Ovary (tissue), 10 donors: ENCODE measurements at regions of chr20 and their contacts with region 1.

Region 1: GRCh38 chr20:45311589-45312211 is 3.6 kb upstream of the MATN4 start:
- DNase-seq: peak; percentile 16 to 67 (median 32)
- H3K4me3 ChIP-seq: no peak overlapping the region
- H3K27ac ChIP-seq: no peak overlapping the region
- H3K4me1 ChIP-seq: no peaks in the 10 kb centered on the region
- H3K27me3 ChIP-seq: no peaks in the 10 kb centered on the region
- CTCF ChIP-seq: peak in 1 of 3 donors; percentile 32
- EP300 ChIP-seq: no peak
- POLR2A ChIP-seq: no peak

Region 2: DNA sequence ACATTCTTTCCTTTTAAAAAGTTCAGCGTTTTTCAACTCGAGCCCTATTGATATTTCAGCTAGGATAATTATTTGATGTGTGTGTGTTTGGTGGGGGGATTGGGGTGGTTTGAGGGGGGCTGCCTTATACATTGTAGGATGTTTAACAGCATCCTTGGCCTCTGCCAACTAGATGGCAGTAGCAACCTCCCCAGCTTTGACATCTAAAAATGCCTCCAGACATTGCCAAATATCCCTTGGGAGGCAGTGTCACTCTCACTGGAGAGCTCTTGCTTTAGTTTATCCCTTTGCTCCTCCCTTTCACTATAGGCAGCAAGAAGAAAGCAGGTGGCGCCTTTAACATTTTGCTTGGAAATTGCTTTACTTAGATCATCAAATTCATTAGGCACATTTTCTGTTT is 81.0 kb after region 1 on chr20:
- intact Hi-C with region 1: no loop called
- DNase-seq: no peak
- H3K4me3 ChIP-seq: no peak overlapping the region
- H3K27ac ChIP-seq: no peak overlapping the region
- H3K4me1 ChIP-seq: no peaks in the 10 kb centered on the region
- H3K27me3 ChIP-seq: no peaks in the 10 kb centered on the region
- CTCF ChIP-seq: no peak
- EP300 ChIP-seq: no peak
- POLR2A ChIP-seq: no peak

Region 3: DNA sequence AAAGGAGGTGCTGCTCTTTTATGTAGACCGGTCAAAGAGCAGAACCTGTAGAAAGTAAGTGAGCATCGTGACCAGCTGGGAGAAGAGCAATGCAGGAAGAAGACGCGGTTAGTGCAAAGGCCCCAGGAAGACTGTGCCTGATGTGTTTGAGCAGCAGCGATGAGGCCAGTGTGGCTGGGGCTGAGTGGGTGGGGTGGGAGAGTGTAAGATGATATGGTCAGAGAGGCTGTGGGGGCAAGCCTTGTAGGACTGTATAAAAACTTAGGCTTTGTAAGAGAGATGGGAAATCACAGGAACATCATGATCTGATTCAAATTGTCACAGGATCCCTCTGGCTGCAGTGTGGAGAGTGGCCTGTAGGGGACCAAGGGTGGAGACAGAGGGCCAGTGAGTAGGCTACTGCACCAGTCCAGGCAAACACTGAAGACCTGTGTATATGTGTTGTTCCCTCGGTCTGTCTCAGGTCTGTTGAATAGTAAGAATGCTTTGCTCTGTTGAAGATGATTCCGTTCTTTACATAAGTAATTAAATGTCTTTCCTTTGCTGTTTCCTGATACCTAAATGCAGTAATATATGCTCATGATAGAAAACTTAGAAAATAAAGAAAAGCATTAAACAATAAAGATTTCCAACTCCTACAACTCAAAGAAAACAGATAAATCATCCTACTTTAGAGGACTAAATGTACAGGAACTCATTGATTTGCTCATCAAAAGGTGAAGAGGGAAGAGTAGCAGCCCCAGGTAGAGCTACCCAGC is 134.3 kb after region 1 on chr20:
- intact Hi-C with region 1: loop called in 1 of 4 experiments (anchors 10 kb)
- DNase-seq: no peak
- H3K4me3 ChIP-seq: no peak overlapping the region
- H3K27ac ChIP-seq: no peak overlapping the region
- H3K4me1 ChIP-seq: no peaks in the 10 kb centered on the region
- H3K27me3 ChIP-seq: no peaks in the 10 kb centered on the region
- CTCF ChIP-seq: no peak
- EP300 ChIP-seq: no peak
- POLR2A ChIP-seq: no peak

Region 4: DNA sequence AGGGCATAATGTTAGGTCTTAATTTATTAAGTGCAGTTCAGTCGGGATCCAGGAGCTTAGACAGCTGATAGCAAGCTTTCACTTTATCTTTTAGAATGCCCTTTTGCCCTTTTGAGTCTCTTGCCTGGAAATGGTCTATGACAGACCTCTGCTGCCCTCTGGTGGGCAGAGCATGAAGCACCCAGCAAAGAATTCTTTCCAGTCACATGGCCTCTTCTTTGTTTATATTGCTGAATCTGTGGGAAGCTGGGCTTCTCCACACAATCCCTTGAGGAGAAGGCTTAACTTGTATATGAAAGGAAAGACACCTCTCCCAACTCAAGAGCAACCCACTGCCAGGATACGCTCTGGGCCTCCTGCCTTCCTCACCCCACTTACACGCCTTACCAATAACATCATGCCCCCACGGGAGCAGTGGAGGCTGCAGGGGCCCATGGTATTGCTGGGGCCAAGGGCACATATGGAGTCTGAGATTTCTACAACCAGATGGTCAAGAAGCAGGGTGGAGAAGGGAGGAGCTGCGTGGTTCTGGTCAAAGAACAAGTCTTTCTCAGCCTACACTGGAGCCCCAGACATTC is 459.6 kb after region 1 on chr20:
- intact Hi-C with region 1: loop called in 3 of 4 experiments (anchors 5 to 10 kb)
- DNase-seq: peak; percentile 65 to 84 (median 78)
- H3K4me3 ChIP-seq: no peak overlapping the region
- H3K27ac ChIP-seq: no peak overlapping the region
- H3K4me1 ChIP-seq: peaks cover 3% of the 10 kb centered on the region
- H3K27me3 ChIP-seq: no peaks in the 10 kb centered on the region
- CTCF ChIP-seq: peak; percentile 83 to 91 (median 89)
- EP300 ChIP-seq: no peak
- POLR2A ChIP-seq: no peak